CD4-positive, alpha-beta T cell (primary cell): ENCODE measurements at regions of chr11 and their contacts with region 1.

Region 1: DNA sequence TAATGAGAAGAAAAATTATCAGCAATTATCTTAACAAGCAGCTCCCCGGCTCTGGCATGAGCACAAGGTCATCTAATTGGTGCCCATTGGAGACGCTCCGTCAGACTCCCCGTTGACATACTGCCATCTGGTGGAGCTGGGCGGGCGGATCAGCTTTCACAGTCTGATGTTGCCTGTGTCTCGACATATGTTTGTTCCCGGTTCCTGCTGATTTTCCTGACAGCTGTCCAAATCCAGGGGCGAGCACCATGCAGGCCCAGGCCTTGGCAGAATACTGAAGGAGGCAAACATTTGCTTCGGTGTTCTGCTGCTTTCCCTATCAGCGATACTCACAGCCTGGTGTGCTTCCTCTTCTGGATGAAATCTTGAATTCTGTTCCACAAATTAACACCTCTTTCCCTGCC is 43.8 kb upstream of the BARX2 start:
- DNase-seq: peak; percentile 32 to 77 (median 56)
- ATAC-seq: peak; percentile 61
- H3K4me3 ChIP-seq: no peak overlapping the region
- H3K4me3 Mint-ChIP-seq: no peak overlapping the region
- H3K27ac ChIP-seq: no peak overlapping the region
- H3K27ac Mint-ChIP-seq: no peak overlapping the region
- H3K4me1 ChIP-seq: no peaks in the 10 kb centered on the region
- H3K4me1 Mint-ChIP-seq: peaks cover 9% of the 10 kb centered on the region
- H3K27me3 ChIP-seq: peaks cover 0 to 3% of the 10 kb centered on the region in 2 experiments
- H3K27me3 Mint-ChIP-seq: no peaks in the 10 kb centered on the region
- CTCF ChIP-seq: peak; percentile 87

Region 2: DNA sequence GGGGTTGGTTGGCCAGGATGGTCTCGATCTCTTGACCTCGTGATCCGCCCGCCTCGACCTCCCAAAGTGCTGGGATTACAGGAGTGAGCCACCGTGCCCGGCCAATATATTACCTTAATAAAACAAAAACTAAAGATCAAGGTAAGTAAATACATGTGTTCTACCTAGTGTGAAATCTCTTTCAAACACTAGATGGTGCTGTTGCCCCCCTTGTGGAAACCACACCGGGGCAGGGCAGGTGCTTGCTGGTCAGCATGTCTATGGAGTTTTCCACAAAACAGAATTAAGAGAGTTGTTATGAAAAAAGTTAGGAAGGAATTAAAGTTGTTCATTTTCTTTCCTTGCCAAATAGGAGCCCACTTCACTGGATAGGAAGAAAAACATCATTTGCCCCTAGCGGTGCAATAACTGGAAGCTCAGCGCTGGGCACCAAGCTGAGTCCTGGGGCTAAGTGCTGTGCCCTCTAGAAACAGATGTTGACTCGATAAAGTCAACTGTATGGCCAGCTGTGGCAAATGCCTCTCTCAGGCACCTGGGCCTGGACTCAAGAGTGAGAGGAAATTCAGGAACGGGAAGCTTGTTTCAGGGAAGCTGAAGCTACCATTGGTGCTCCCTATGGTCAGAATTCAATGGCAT is 447.1 kb before region 1 on chr11:
- CTCF ChIA-PET with region 1: interaction called, 3 read pairs
- POLR2A ChIA-PET with region 1: no interaction called
- intact Hi-C with region 1: loop called (anchors 1 to 5 kb)
- DNase-seq: peak; percentile 27 to 80 (median 40)
- ATAC-seq: peak; percentile 81
- H3K4me3 ChIP-seq: no peak overlapping the region
- H3K4me3 Mint-ChIP-seq: no peak overlapping the region
- H3K27ac ChIP-seq: no peak overlapping the region
- H3K27ac Mint-ChIP-seq: no peak overlapping the region
- H3K4me1 ChIP-seq: no peaks in the 10 kb centered on the region
- H3K4me1 Mint-ChIP-seq: peaks cover 4% of the 10 kb centered on the region
- H3K27me3 ChIP-seq: peaks cover 32 to 50% of the 10 kb centered on the region in 2 experiments
- H3K27me3 Mint-ChIP-seq: peaks cover 81% of the 10 kb centered on the region
- CTCF ChIP-seq: peak; percentile 80

Region 3: DNA sequence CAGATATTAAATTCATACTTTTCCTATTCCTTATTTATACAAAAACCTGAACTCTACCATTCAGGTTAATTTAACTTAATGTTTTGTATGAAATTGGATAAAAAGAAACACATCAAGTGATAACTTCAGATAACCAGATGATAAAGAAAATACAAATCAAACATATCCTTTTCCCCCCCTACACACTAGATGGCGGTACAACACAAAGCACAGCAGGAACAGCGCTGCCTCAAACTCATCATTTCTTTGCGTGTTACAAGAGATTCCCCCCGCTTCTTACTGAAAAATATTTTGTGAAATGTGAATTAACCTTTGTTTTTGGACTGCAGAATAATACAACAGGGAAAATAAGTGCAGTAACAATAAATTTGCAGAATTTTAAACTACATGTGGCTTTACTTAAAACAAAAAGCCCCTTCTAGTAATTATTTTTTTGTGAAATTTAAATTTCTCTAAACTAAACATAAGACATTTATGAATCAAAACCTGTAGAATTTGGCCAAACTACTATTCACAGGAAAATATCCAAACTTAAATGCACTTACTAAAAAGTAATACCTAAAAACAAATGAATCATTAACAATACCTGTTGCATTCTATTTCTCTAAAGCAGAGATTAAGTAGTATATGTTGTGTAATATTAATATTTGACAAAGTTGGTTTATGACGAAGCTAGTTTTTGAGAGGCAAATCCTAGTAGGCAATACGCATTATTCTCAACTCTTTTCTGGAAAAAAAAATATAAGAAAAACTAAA is 214.1 kb before region 1 on chr11:
- CTCF ChIA-PET with region 1: interaction called, 12 read pairs
- POLR2A ChIA-PET with region 1: no interaction called
- intact Hi-C with region 1: loop called (anchors 1 kb)
- DNase-seq: peak in 12 of 14 experiments; percentile 12 to 76 (median 26)
- ATAC-seq: no peak
- H3K4me3 ChIP-seq: no peak overlapping the region
- H3K4me3 Mint-ChIP-seq: no peak overlapping the region
- H3K27ac ChIP-seq: no peak overlapping the region
- H3K27ac Mint-ChIP-seq: no peak overlapping the region
- H3K4me1 ChIP-seq: no peaks in the 10 kb centered on the region
- H3K4me1 Mint-ChIP-seq: no peaks in the 10 kb centered on the region
- H3K27me3 ChIP-seq: no peaks in the 10 kb centered on the region
- H3K27me3 Mint-ChIP-seq: no peaks in the 10 kb centered on the region
- CTCF ChIP-seq: peak; percentile 83

Region 4: DNA sequence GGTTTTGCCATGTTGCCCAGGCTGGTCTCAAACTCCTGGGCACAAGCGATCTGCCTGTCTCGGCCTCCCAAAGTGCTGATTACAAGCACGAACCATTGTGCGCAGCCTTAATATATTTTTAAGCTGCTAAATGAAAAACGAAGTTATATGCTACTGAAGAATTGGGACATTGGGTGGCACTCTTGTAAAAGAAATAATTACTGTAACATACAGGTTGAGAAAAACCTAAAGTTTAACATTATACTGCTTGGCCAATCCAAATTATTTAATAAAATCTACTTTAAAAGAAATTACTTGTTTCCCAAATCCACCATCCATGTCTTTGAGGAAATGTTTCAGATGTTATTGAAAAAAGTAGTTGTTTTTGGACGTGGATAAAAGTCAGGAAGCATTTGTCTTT is 101.9 kb before region 1 on chr11:
- CTCF ChIA-PET with region 1: interaction called, 4 read pairs
- POLR2A ChIA-PET with region 1: interaction called, 4 read pairs
- intact Hi-C with region 1: loop called (anchors 2 kb)
- DNase-seq: peak in 3 of 14 experiments; percentile 13 to 26 (median 19)
- ATAC-seq: no peak
- H3K4me3 ChIP-seq: no peak overlapping the region
- H3K4me3 Mint-ChIP-seq: no peak overlapping the region
- H3K27ac ChIP-seq: no peak overlapping the region
- H3K27ac Mint-ChIP-seq: no peak overlapping the region
- H3K4me1 ChIP-seq: no peaks in the 10 kb centered on the region
- H3K4me1 Mint-ChIP-seq: no peaks in the 10 kb centered on the region
- H3K27me3 ChIP-seq: no peaks in the 10 kb centered on the region
- H3K27me3 Mint-ChIP-seq: no peaks in the 10 kb centered on the region
- CTCF ChIP-seq: peak; percentile 28

Region 5: GRCh38 chr11:129298988-129299387 is 32.9 kb before region 1 on chr11:
- CTCF ChIA-PET with region 1: no interaction called
- POLR2A ChIA-PET with region 1: no interaction called
- intact Hi-C with region 1: no loop called
- DNase-seq: no peak
- ATAC-seq: no peak
- H3K4me3 ChIP-seq: no peak overlapping the region
- H3K4me3 Mint-ChIP-seq: no peak overlapping the region
- H3K27ac ChIP-seq: no peak overlapping the region
- H3K27ac Mint-ChIP-seq: no peak overlapping the region
- H3K4me1 ChIP-seq: no peaks in the 10 kb centered on the region
- H3K4me1 Mint-ChIP-seq: no peaks in the 10 kb centered on the region
- H3K27me3 ChIP-seq: no peaks in the 10 kb centered on the region
- H3K27me3 Mint-ChIP-seq: peaks cover 10% of the 10 kb centered on the region
- CTCF ChIP-seq: no peak